Right lobe of liver (tissue), 6 donors: ENCODE measurements at regions of chr6 and their contacts with region 1.

Region 1: GRCh38 chr6:17278289-17279061 is 2.7 kb upstream of the RBM24 start:
- DNase-seq: no peak
- ATAC-seq: peak in 1 of 4 donors; percentile 12
- H3K4me3 ChIP-seq: no peak overlapping the region
- H3K27ac ChIP-seq: no peak overlapping the region
- H3K4me1 ChIP-seq: no peaks in the 10 kb centered on the region
- H3K27me3 ChIP-seq: no peaks in the 10 kb centered on the region
- CTCF ChIP-seq: no peak
- POLR2A ChIP-seq: no peak

Region 2: DNA sequence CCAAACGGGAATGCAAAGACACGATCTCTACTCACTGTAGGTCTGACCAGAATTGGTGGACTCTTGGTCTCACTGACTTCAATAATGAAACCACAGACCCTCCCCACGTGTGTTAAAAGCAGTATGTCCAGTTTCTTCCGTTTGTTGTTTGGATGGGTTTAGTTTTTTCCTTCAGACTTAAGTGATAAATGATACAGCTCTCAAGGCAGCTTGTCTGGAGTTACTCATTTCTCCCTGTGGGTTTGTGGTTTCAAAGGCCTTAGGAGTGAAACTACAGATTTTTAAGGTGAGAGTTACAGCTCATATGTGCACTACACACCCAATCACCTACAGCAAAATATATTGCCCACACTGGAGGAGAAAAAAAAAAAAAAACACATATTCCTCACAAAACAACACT is 263.3 kb before region 1 on chr6:
- intact Hi-C with region 1: no loop called
- DNase-seq: no peak
- ATAC-seq: no peak
- H3K4me3 ChIP-seq: no peak overlapping the region
- H3K27ac ChIP-seq: no peak overlapping the region
- H3K4me1 ChIP-seq: no peaks in the 10 kb centered on the region
- H3K27me3 ChIP-seq: no peaks in the 10 kb centered on the region
- CTCF ChIP-seq: no peak
- POLR2A ChIP-seq: no peak

Region 3: DNA sequence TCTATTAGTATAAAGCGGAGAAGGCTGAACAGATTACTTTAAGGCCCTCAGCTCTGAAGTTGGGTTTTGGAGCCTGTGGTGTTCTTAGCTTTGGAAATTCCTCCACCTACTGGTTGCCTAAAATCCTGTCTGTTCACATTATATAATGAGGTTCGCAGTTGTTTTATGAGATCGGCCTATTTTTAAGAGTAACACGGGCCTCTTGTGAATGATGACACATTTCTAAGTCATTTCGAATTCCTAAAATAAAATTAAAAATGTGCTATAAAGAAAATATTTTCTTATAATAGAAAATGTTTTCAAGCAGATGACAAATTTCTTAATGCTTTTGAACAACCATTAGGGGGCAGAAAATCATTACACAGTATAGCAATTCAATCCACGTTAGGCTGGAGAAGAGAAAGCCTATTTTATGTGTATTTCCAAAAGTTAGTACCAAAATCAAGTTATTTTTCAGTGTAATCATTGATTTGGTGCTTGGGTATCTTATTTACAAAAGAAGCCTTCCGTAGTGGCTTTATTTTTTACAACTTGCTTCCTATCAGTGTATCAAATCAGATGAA is 305.8 kb after region 1 on chr6:
- intact Hi-C with region 1: loop called in 1 of 2 experiments (anchors 5 kb)
- DNase-seq: no peak
- ATAC-seq: peak; percentile 82 to 91 (median 88)
- H3K4me3 ChIP-seq: peak overlapping the region in 1 of 3 donors; percentile 32
- H3K27ac ChIP-seq: peak overlapping the region in 2 of 3 donors; percentile 24 to 46
- H3K4me1 ChIP-seq: peaks cover 0 to 13% (median 0%) of the 10 kb centered on the region in 4 donors
- H3K27me3 ChIP-seq: no peaks in the 10 kb centered on the region
- CTCF ChIP-seq: peak; percentile 81 to 93 (median 86)
- POLR2A ChIP-seq: no peak